Common myeloid progenitor, CD34-positive (primary cell): ENCODE measurements at regions of chr2 and their contacts with region 1.

Region 1: GRCh38 chr2:84970868-84971509 is at the start of gene KCMF1:
- DNase-seq: peak; percentile 54 to 75 (median 66)
- H3K4me3 ChIP-seq: peak within 1 kb of the TSS; percentile 82 to 95 (median 85)
- H3K27ac ChIP-seq: peak within 1 kb of the TSS; percentile 93 to 95
- H3K4me1 ChIP-seq: peaks cover 19 to 45% (median 31%) of the 10 kb centered on the region in 4 experiments
- H3K27me3 ChIP-seq: no peaks in the 10 kb centered on the region

Region 2: DNA sequence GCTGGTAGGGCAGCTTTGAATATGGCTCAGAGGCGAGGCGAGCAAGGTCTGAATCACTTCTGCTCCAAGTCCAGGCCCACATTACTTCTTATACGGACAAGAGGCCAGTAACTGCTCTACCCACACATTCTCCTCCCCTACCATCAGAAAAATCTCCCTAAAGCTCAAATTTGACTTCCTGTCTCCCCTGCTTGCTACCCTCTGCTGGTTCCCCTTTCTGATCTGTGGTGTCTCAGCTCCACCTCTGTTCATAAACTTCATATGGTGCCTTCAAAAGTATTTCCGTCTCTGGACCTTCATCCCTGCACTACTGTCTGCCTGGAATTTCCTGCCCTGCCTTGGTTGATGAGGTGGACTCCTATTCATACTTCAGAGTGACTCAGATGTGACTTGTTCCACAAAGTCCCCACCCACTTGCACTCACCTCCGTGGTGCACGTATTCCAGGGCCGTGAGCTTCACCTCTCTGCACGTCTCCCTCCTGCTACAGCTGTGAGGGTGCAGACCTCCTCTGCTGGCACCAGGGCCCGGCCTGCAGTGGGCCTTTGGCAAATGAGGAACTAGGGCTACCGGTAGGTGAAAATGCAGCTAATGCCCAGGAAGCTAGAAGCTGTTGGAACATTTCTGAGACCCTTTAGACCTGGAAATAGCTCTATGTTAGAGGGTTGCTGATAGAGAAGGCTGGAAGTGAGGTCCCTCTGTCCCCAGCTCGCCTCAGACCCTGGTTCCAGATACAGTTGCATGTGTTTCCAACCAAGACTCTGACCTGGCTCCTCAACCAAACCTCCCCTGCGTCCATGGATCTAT is 24.6 kb before region 1 on chr2:
- CTCF ChIA-PET with region 1: interaction called, 18 read pairs
- POLR2A ChIA-PET with region 1: interaction called, 5 read pairs
- DNase-seq: peak; percentile 59 to 89 (median 82)
- H3K4me3 ChIP-seq: peak overlapping the region in 4 of 7 experiments; percentile 2 to 60 (median 29)
- H3K27ac ChIP-seq: peak overlapping the region; percentile 51 to 69
- H3K4me1 ChIP-seq: peaks cover 6 to 25% (median 21%) of the 10 kb centered on the region in 4 experiments
- H3K27me3 ChIP-seq: no peaks in the 10 kb centered on the region

Region 3: GRCh38 chr2:85905187-85905666 is 934.2 kb after region 1 on chr2:
- CTCF ChIA-PET with region 1: no interaction called
- POLR2A ChIA-PET with region 1: no interaction called
- DNase-seq: no peak
- H3K4me3 ChIP-seq: no peak overlapping the region
- H3K27ac ChIP-seq: no peak overlapping the region
- H3K4me1 ChIP-seq: peaks cover 0 to 16% (median 3%) of the 10 kb centered on the region in 4 experiments
- H3K27me3 ChIP-seq: no peaks in the 10 kb centered on the region